ENCODE measurements at regions of chr6 and their contacts with region 1.

Region 1: DNA sequence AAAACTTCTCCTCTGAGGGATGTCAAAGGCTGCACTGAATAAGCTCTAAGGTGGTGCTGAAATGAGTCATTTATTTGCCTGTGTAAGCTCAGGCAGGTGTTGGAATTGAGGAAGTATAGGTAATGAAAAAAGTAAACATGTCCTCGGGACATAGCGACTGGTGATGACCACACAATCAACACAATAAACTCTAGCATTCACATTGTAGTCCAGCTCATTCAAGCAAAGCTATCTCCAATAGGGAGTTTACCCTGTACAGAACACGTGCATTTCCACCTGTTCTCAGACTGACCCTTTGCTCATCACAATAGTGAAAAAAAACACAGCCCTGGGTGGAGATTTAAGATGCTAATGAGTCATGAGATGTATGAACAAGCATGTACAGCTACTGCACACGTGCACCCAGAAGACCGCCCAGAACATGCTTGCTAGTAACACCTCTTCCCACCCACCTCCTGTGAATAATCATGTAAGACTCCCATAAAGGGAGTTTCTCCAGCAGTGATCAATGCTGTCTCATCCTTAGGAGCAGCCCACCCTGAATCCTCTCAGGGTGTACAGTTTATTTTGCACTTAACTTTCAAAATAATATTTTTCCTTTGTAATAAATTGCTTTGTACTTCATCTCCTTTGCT is 33.0 kb upstream of the POU5F1 start:
- DNase-seq: peak in 1 of 42 donors; percentile 20

Region 2: DNA sequence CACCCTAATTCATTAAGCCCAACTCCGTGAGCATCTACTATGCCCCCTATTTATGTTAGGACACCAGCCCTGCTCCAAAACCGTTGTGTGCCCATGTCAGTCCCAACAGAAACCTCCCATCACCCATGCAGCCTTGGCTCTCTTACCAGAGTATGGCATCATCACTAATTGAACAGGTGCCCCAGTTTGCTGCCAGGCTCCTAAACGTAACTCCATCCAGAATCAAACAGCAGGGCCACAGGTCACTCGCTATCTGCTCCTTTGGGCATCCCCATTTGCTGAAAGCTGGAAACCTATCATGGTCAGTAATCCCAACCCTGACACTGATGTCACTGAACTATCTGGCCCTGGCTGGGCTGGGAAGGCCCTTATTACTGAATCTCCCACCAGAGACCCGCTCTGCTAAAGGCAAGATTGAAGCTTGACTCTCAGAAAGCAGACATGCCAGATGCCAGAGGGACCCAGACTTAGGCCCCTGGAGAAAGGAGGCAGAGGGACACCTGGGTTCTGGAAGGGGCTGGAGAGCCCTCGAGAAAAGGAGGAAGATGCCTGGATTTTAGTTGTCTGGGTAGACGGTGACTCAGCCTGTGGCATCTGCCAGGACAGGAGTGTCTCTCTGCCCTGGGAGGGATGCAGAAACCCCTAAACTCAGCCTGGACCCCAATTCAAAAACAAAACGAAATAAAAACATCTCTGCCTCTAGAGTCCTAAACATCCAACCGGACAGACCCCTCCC is 248.7 kb before region 1 on chr6:
- intact Hi-C with region 1: no loop called
- DNase-seq: no peak

Region 3: GRCh38 chr6:31356946-31357466 is 153.5 kb after region 1 on chr6 and contains the start of gene HLA-B:
- intact Hi-C with region 1: loop called (anchors 5 kb)
- DNase-seq: peak; percentile 6 to 93 (median 68)